Tibial artery (tissue), 4 donors: ENCODE measurements at regions of chr17 and their contacts with region 1.

Region 1: GRCh38 chr17:13584701-13585080 is 17.0 kb downstream of the HS3ST3A1 start:
- DNase-seq: no peak
- H3K4me3 ChIP-seq: no peak overlapping the region
- H3K27ac ChIP-seq: no peak overlapping the region
- H3K4me1 ChIP-seq: no peaks in the 10 kb centered on the region
- H3K27me3 ChIP-seq: peaks cover 0 to 5% of the 10 kb centered on the region in 2 donors
- CTCF ChIP-seq: no peak

Region 2: GRCh38 chr17:13647543-13648021 is 62.9 kb after region 1 on chr17:
- intact Hi-C with region 1: no loop called
- DNase-seq: no peak
- H3K4me3 ChIP-seq: no peak overlapping the region
- H3K27ac ChIP-seq: no peak overlapping the region
- H3K4me1 ChIP-seq: no peaks in the 10 kb centered on the region
- H3K27me3 ChIP-seq: no peaks in the 10 kb centered on the region
- CTCF ChIP-seq: no peak

Region 3: DNA sequence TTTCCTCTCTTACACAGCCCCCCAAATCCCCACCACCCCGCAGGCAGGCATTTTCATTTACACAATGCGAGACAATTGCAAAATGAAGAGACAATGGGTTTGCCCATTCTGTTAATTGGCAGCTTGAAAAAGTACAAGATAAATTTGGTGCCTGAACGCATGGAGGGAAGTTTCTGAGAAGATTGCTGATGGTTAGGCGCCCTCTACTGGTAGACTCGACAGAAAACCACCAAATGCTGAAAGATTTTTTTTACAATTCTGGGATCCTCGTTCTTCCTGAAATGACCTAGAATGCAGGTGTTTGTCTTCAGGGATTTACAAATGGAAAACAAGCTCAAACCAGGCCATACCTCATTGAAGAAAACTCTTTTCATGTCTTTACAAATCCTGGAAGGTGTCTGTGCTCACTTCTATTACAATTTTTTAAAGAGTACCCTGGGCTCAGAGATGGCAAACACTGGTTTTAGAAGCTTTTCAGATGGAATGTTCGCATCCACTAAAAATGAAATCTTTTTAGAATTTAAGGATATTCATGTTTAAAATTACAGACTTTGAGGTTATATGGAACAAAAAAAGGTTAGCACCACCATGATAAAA is 1341.9 kb after region 1 on chr17:
- intact Hi-C with region 1: loop called (anchors 10 kb)
- DNase-seq: peak in 1 of 2 donors; percentile 40
- H3K4me3 ChIP-seq: no peak overlapping the region
- H3K27ac ChIP-seq: no peak overlapping the region
- H3K4me1 ChIP-seq: no peaks in the 10 kb centered on the region
- H3K27me3 ChIP-seq: no peaks in the 10 kb centered on the region
- CTCF ChIP-seq: peak; percentile 55 to 59